Prostate gland (tissue), 2 donors: ENCODE measurements at regions of chr6 and their contacts with region 1.

Region 1: DNA sequence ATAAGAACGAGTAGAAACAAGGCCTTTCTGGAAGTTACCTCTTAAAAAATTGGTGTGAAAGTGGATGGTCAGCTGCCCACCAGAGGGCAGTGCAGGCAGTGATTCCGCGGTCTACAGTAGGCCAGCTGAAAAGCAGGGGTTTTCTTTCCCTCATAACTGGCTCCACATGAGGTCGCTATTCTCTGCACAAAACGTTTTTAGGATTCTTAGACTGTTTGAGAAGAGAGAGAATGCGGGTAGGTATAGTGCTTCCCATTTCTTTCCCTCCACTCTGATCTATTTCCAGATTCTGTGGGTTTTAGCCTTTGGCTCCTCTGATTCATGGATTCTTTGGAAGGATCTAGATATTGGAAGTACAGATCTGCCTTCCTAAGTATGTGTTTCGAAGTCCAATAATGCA is 14.2 kb downstream of the FIG4 start:
- DNase-seq: peak; percentile 72
- H3K4me3 ChIP-seq: no peak overlapping the region
- H3K27ac ChIP-seq: no peak overlapping the region
- H3K4me1 ChIP-seq: no peaks in the 10 kb centered on the region
- H3K27me3 ChIP-seq: no peaks in the 10 kb centered on the region
- CTCF ChIP-seq: peak; percentile 91 to 98 (median 97)
- POLR2A ChIP-seq: no peak

Region 2: DNA sequence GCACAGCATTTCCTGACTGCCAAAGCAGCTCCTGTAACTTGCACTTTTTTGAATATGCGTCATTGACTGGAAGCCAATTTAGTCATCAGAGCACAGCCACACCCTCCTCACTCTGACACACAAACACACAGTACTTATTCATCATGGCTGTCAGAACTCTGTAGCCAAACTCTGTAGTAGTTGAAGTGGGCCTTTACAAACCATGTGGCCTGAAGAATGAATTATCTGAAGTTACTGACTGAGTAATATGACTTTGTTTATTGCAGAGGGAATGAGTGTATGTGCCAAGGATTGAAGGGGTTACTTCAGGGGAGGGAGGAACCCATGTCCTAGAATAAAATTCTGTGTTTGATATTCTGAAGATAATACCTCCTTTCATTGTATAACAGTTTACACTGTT is 88.5 kb after region 1 on chr6:
- intact Hi-C with region 1: no loop called
- DNase-seq: peak; percentile 45
- H3K4me3 ChIP-seq: no peak overlapping the region
- H3K27ac ChIP-seq: peak overlapping the region; percentile 20 to 38
- H3K4me1 ChIP-seq: peaks cover 9% of the 10 kb centered on the region
- H3K27me3 ChIP-seq: no peaks in the 10 kb centered on the region
- CTCF ChIP-seq: no peak
- POLR2A ChIP-seq: no peak

Region 3: DNA sequence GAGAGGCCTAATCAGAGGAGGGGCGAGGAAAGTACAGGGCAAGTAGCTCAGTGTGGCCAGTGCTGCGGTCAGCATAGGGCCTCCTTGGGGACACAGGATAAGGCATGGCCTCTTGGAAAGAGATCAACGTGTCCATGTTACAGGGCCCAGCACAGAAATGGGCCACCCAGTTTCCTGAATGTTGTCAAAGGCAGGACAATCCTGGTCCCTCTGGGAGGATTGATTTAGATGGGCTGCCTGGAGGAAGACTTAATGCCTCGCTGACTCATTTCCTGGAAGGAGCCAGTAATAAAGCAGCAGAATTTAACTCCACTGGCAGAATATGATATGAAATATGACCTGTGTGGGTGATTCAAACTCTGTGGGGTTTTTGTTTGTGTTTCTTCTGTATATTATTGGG is 693.5 kb after region 1 on chr6:
- intact Hi-C with region 1: loop called (anchors 10 kb)
- DNase-seq: no peak
- H3K4me3 ChIP-seq: no peak overlapping the region
- H3K27ac ChIP-seq: no peak overlapping the region
- H3K4me1 ChIP-seq: no peaks in the 10 kb centered on the region
- H3K27me3 ChIP-seq: no peaks in the 10 kb centered on the region
- CTCF ChIP-seq: no peak
- POLR2A ChIP-seq: no peak